PC-3 (cell line): ENCODE measurements at regions of chr1 and their contacts with region 1.

Region 1: DNA sequence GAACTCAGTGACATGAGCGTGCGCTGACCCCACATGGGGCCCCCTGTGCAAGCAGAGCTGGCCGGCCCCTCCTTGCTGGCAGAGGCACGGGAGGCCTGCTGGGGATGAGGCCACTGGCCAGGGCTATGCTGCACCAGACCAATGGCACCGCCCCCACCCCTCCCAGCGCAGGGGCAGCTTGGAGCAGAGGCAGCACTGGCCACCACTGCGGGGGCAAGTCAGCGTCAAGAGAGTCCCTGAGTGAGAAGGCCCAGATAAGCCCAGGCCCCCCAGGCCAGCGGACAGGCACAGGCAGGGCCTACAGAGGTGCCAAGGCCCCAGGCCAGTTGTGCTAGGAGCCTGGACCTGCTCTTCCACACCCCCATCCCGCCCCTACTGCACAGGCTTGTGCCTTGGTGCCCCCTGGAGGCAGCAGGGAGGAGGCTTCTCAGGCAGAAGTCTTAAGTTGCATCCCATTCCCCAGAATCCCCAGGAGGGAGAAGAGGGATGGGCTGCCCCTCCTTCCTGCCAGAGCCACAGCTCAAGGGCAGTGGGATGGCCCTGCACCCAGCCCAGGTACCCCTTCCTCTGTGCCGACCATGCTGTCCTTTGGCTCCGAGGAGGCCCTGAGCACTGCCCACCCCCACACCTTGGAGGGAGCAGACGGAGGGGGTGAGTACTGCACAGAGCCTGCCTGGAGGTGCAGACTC is 35.8 kb downstream of the EPHX1 start:
- DNase-seq: peak; percentile 86
- ATAC-seq: peak; percentile 81
- H3K4me3 ChIP-seq: no peak overlapping the region
- H3K27ac ChIP-seq: no peak overlapping the region
- H3K4me1 ChIP-seq: no peaks in the 10 kb centered on the region
- H3K27me3 ChIP-seq: no peaks in the 10 kb centered on the region
- CTCF ChIP-seq: peak; percentile 92

Region 2: GRCh38 chr1:225554216-225554812 is 291.4 kb before region 1 on chr1:
- CTCF ChIA-PET with region 1: no interaction called
- POLR2A ChIA-PET with region 1: no interaction called
- intact Hi-C with region 1: loop called (anchors 1 kb)
- DNase-seq: peak; percentile 79
- ATAC-seq: peak; percentile 61; the same call in 1 of the 2 replicates
- H3K4me3 ChIP-seq: no peak overlapping the region
- H3K27ac ChIP-seq: no peak overlapping the region
- H3K4me1 ChIP-seq: no peaks in the 10 kb centered on the region
- H3K27me3 ChIP-seq: no peaks in the 10 kb centered on the region
- CTCF ChIP-seq: peak; percentile 81

Region 3: GRCh38 chr1:225877580-225877979 is 31.9 kb after region 1 on chr1:
- CTCF ChIA-PET with region 1: no interaction called
- POLR2A ChIA-PET with region 1: no interaction called
- intact Hi-C with region 1: no loop called
- DNase-seq: peak; percentile 58
- ATAC-seq: no peak
- H3K4me3 ChIP-seq: no peak overlapping the region
- H3K27ac ChIP-seq: no peak overlapping the region
- H3K4me1 ChIP-seq: peaks cover 89% of the 10 kb centered on the region
- H3K27me3 ChIP-seq: no peaks in the 10 kb centered on the region
- CTCF ChIP-seq: peak; percentile 79

Region 4: GRCh38 chr1:225977937-225978748 is 132.4 kb after region 1 on chr1:
- CTCF ChIA-PET with region 1: no interaction called
- POLR2A ChIA-PET with region 1: no interaction called
- intact Hi-C with region 1: loop called (anchors 5 kb)
- DNase-seq: no peak
- ATAC-seq: no peak
- H3K4me3 ChIP-seq: no peak overlapping the region
- H3K27ac ChIP-seq: no peak overlapping the region
- H3K4me1 ChIP-seq: peaks cover 2% of the 10 kb centered on the region; the same call in 1 of the 2 replicates
- H3K27me3 ChIP-seq: no peaks in the 10 kb centered on the region
- CTCF ChIP-seq: no peak

Region 5: DNA sequence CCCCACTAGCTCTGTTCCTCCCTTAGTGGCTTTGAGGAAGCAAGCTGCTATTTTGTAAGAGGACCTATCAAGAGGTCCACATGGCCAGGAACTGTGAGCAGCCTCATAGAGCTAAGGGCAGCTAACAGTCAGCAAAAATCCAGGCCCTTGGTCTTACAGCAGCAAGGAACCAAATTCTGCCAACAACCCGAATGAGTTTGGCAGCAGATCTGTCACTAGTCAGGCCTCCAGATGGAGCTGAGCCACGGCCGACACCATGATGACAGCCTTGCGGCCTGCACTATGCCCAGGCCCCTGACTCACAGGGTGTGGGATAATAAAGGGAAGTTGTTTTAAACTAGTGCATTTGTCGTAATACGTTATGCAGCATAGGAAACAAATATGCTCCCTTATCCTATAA is 188.8 kb after region 1 on chr1:
- CTCF ChIA-PET with region 1: no interaction called
- POLR2A ChIA-PET with region 1: no interaction called
- intact Hi-C with region 1: no loop called
- DNase-seq: peak; percentile 81
- ATAC-seq: peak; percentile 99
- H3K4me3 ChIP-seq: no peak overlapping the region
- H3K27ac ChIP-seq: peak overlapping the region; percentile 30
- H3K4me1 ChIP-seq: peaks cover 9% of the 10 kb centered on the region; the same call in 1 of the 2 replicates
- H3K27me3 ChIP-seq: no peaks in the 10 kb centered on the region
- CTCF ChIP-seq: no peak